ENCODE measurements at regions of chr6 and their contacts with region 1.

Region 1: GRCh38 chr6:42879372-42880239 is at the start of gene RPL7L1:
- DNase-seq: peak; percentile 93
- ATAC-seq: peak; percentile 95
- H3K4me3 ChIP-seq: peak within 1 kb of the TSS; percentile 76 to 99 (median 90)
- H3K4me3 Mint-ChIP-seq: peak within 1 kb of the TSS; percentile 96
- H3K27ac ChIP-seq: peak within 1 kb of the TSS; percentile 85 to 87
- H3K27ac Mint-ChIP-seq: peak within 1 kb of the TSS; percentile 97
- H3K4me1 ChIP-seq: peaks cover 8 to 18% of the 10 kb centered on the region in 2 donors
- H3K4me1 Mint-ChIP-seq: peaks cover 21% of the 10 kb centered on the region
- H3K27me3 ChIP-seq: no peaks in the 10 kb centered on the region
- H3K27me3 Mint-ChIP-seq: no peaks in the 10 kb centered on the region
- CTCF ChIP-seq: no peak
- total RNA-seq, gene RPL7L1: 95.9 and 100 TPM in 2 replicates

Region 2: DNA sequence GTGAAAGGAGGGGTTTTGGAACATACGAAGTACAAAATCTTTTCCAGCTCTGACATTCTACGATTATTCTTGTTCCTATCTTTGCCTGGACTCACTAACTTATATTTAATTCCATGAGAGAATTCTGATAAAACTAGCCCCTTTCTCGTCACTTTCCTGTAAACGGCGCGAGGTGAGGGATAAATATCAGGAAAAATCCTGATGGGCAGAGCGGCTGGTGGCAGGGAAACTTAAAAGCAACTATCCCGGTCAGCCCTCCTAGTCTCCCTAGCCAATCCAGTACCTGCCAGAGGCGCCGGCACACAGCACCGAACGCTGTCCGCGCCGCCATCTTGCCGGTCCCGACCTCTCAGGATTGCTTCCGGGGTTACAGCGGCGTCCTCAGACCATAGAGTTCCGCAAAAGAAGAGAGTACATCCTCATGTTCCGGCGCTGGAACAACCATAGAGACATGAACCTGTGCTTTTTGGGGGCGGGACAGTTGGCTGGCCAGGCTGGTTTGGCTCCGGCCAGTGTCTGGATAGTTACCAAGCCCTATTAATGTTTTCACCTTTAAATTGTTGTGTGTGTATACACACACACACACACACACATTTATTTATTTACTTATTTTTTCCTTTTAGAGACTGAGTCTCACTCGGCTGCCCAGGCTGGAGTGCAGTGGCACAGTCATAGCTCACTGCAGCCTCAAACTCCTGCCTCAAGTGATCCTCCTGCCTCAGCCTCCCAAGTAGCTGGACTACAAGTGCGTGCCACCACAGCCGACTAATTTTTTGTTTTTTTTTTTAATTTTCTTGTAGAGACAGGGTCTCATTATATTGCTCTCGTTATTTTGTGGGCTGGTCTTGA is 661.9 kb before region 1 on chr6 and contains the start of gene MRPS10:
- CTCF ChIA-PET with region 1: no interaction called
- POLR2A ChIA-PET with region 1: no interaction called
- intact Hi-C with region 1: loop called (anchors 10 kb)
- DNase-seq: peak; percentile 92
- ATAC-seq: peak; percentile 99
- H3K4me3 ChIP-seq: peak within 1 kb of the TSS; percentile 76 to 98 (median 86)
- H3K4me3 Mint-ChIP-seq: peak within 1 kb of the TSS; percentile 99
- H3K27ac ChIP-seq: peak within 1 kb of the TSS; percentile 58 to 76
- H3K27ac Mint-ChIP-seq: peak within 1 kb of the TSS; percentile 98
- H3K4me1 ChIP-seq: peaks cover 7 to 14% of the 10 kb centered on the region in 2 donors
- H3K4me1 Mint-ChIP-seq: peaks cover 23% of the 10 kb centered on the region
- H3K27me3 ChIP-seq: no peaks in the 10 kb centered on the region
- H3K27me3 Mint-ChIP-seq: peaks cover 4% of the 10 kb centered on the region
- CTCF ChIP-seq: no peak
- total RNA-seq, gene MRPS10: 26.4 and 28.6 TPM in 2 replicates

Region 3: DNA sequence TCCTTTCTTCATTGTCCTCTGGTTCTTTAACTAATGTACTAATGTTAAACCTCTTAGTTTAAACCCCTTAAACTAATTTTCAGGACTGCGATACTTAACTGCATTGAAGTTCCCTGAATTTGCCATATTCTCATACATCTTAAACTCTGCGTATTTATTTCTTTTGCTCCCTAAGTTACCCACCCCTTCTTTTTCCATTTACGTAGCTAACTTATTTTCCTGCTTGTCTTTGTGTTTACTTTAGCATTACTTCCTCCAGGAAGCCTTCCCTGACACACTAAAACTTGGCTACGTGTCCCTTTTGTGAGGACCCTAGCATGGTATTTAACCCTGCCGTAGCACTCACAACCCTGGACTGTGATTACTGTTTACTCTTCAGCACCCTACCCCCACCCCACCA is 236.8 kb before region 1 on chr6:
- CTCF ChIA-PET with region 1: no interaction called
- POLR2A ChIA-PET with region 1: no interaction called
- intact Hi-C with region 1: no loop called
- DNase-seq: no peak
- ATAC-seq: no peak
- H3K4me3 ChIP-seq: no peak overlapping the region
- H3K4me3 Mint-ChIP-seq: no peak overlapping the region
- H3K27ac ChIP-seq: no peak overlapping the region
- H3K27ac Mint-ChIP-seq: no peak overlapping the region
- H3K4me1 ChIP-seq: no peaks in the 10 kb centered on the region
- H3K4me1 Mint-ChIP-seq: no peaks in the 10 kb centered on the region
- H3K27me3 ChIP-seq: no peaks in the 10 kb centered on the region
- H3K27me3 Mint-ChIP-seq: no peaks in the 10 kb centered on the region
- CTCF ChIP-seq: no peak

Region 4: DNA sequence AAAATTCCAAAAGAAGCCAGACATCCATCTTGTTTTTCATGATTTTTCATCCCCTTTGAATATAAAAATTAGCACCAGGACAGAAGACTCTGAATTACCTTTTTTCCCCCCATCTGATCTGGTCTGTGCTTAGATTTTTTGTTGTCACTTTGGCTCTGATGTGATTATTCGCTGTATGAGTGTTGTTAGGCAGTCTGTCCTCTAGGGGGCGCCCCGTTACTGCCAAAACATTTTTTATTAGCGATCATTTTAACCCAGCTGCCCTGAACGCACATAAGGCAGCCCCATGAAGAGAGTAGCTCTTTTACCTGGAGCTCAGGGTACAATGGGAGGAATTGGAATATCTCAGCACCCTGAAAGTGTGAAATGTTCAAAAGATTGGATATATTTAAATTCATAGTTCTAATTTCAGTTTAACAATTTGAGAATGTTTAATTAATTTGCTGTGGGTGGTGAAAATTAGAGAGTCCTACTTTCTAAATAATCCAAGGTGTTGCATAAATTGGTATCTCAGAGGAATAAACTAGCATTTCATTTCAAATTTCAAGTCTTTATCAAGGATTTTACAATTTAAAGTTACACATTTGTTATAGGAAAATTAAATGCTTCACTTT is 218.0 kb before region 1 on chr6:
- CTCF ChIA-PET with region 1: interaction called, 68 read pairs
- POLR2A ChIA-PET with region 1: interaction called, 4 read pairs
- intact Hi-C with region 1: loop called (anchors 1 kb)
- DNase-seq: peak; percentile 84
- ATAC-seq: peak; percentile 93
- H3K4me3 ChIP-seq: no peak overlapping the region
- H3K4me3 Mint-ChIP-seq: no peak overlapping the region
- H3K27ac ChIP-seq: peak overlapping the region in 1 of 2 donors; percentile 5
- H3K27ac Mint-ChIP-seq: no peak overlapping the region
- H3K4me1 ChIP-seq: no peaks in the 10 kb centered on the region
- H3K4me1 Mint-ChIP-seq: no peaks in the 10 kb centered on the region
- H3K27me3 ChIP-seq: no peaks in the 10 kb centered on the region
- H3K27me3 Mint-ChIP-seq: no peaks in the 10 kb centered on the region
- CTCF ChIP-seq: peak; percentile 91

Region 5: DNA sequence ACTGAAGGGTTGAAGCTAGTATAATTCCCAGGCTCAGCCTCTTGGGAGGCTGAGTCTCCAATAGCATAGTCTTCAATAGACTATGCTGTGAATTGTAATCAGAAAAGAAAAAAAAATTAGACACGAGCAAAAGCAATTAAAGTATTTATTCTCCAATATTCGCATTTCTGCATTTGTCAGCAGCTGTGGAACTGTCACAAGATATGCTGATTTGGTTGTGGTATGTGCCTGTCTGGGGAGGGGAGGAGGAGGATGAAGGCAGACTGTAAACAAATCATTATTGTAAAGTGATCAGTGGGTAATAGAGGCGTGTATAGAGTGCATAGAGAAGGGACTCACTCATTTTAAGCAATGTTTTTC is 107.9 kb before region 1 on chr6:
- CTCF ChIA-PET with region 1: interaction called, 3 read pairs
- POLR2A ChIA-PET with region 1: interaction called, 6 read pairs
- intact Hi-C with region 1: loop called (anchors 1 kb)
- DNase-seq: peak; percentile 68
- ATAC-seq: no peak
- H3K4me3 ChIP-seq: peak overlapping the region; percentile 30 to 77 (median 49)
- H3K4me3 Mint-ChIP-seq: peak overlapping the region; percentile 87
- H3K27ac ChIP-seq: peak overlapping the region; percentile 90 to 92
- H3K27ac Mint-ChIP-seq: peak overlapping the region; percentile 99
- H3K4me1 ChIP-seq: peaks cover 39 to 52% of the 10 kb centered on the region in 2 donors
- H3K4me1 Mint-ChIP-seq: peaks cover 52% of the 10 kb centered on the region
- H3K27me3 ChIP-seq: no peaks in the 10 kb centered on the region
- H3K27me3 Mint-ChIP-seq: no peaks in the 10 kb centered on the region
- CTCF ChIP-seq: no peak

Region 6: GRCh38 chr6:42890311-42891198 is 10.9 kb after region 1 on chr6:
- CTCF ChIA-PET with region 1: interaction called, 35 read pairs
- POLR2A ChIA-PET with region 1: interaction called, 26 read pairs
- intact Hi-C with region 1: loop called (anchors 1 kb)
- DNase-seq: peak; percentile 93
- ATAC-seq: peak; percentile 98
- H3K4me3 ChIP-seq: peak overlapping the region; percentile 76 to 94 (median 87)
- H3K4me3 Mint-ChIP-seq: peak overlapping the region; percentile 92
- H3K27ac ChIP-seq: peak overlapping the region; percentile 77 to 89
- H3K27ac Mint-ChIP-seq: peak overlapping the region; percentile 92
- H3K4me1 ChIP-seq: peaks cover 26 to 33% of the 10 kb centered on the region in 2 donors
- H3K4me1 Mint-ChIP-seq: peaks cover 38% of the 10 kb centered on the region
- H3K27me3 ChIP-seq: no peaks in the 10 kb centered on the region
- H3K27me3 Mint-ChIP-seq: no peaks in the 10 kb centered on the region
- CTCF ChIP-seq: no peak

Region 7: GRCh38 chr6:42901536-42901957 is 21.9 kb after region 1 on chr6:
- CTCF ChIA-PET with region 1: interaction called, 11 read pairs
- POLR2A ChIA-PET with region 1: no interaction called
- intact Hi-C with region 1: loop called (anchors 1 kb)
- DNase-seq: peak; percentile 88
- ATAC-seq: peak; percentile 99
- H3K4me3 ChIP-seq: no peak overlapping the region
- H3K4me3 Mint-ChIP-seq: no peak overlapping the region
- H3K27ac ChIP-seq: no peak overlapping the region
- H3K27ac Mint-ChIP-seq: no peak overlapping the region
- H3K4me1 ChIP-seq: peaks cover 5 to 8% of the 10 kb centered on the region in 2 donors
- H3K4me1 Mint-ChIP-seq: peaks cover 10% of the 10 kb centered on the region
- H3K27me3 ChIP-seq: no peaks in the 10 kb centered on the region
- H3K27me3 Mint-ChIP-seq: no peaks in the 10 kb centered on the region
- CTCF ChIP-seq: peak; percentile 93